ENCODE measurements at regions of chr1 and their contacts with region 1.

Region 1: GRCh38 chr1:91929250-91929649 is 20.0 kb upstream of the BRDT start:
- DNase-seq: peak in 1 of 2 experiments; percentile 20
- H3K4me3 ChIP-seq: no peak overlapping the region
- H3K27ac ChIP-seq: no peak overlapping the region
- H3K4me1 ChIP-seq: peaks cover 11% of the 10 kb centered on the region
- H3K27me3 ChIP-seq: no peaks in the 10 kb centered on the region
- CTCF ChIP-seq: no peak

Region 2: DNA sequence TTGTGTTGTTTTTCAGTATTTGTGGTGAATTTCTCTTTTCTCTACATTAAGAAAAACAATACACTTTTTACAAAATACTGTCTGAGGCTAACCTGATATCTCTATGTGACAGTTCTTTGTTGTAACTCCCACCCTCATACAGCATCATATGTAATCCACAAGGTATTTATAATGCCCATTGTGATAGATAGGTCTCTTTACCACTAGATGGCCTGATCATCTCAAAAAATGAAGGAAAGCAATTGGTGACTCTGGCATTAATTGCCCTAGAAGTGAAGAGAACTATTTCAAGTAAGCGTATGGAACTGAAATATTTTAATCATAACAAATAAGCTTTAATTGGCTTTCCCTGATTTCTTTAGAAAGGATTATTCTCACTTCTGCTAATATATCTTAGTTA is 488.4 kb before region 1 on chr1:
- CTCF ChIA-PET with region 1: no interaction called
- POLR2A ChIA-PET with region 1: no interaction called
- intact Hi-C with region 1: loop called (anchors 5 kb)
- DNase-seq: peak in 1 of 2 experiments; percentile 47
- H3K4me3 ChIP-seq: no peak overlapping the region
- H3K27ac ChIP-seq: no peak overlapping the region
- H3K4me1 ChIP-seq: no peaks in the 10 kb centered on the region
- H3K27me3 ChIP-seq: no peaks in the 10 kb centered on the region
- CTCF ChIP-seq: peak; percentile 66

Region 3: GRCh38 chr1:91803847-91804545 is 125.3 kb before region 1 on chr1:
- CTCF ChIA-PET with region 1: interaction called, 3 read pairs
- POLR2A ChIA-PET with region 1: no interaction called
- intact Hi-C with region 1: loop called (anchors 5 kb)
- DNase-seq: peak; percentile 10 to 61
- H3K4me3 ChIP-seq: no peak overlapping the region
- H3K27ac ChIP-seq: peak overlapping the region; percentile 90
- H3K4me1 ChIP-seq: peaks cover 34% of the 10 kb centered on the region
- H3K27me3 ChIP-seq: no peaks in the 10 kb centered on the region
- CTCF ChIP-seq: no peak

Measured in PC-9 (cell line).